Right ventricle myocardium inferior (tissue), 1 donor: ENCODE measurements at regions of chr4 and their contacts with region 1.

Region 1: DNA sequence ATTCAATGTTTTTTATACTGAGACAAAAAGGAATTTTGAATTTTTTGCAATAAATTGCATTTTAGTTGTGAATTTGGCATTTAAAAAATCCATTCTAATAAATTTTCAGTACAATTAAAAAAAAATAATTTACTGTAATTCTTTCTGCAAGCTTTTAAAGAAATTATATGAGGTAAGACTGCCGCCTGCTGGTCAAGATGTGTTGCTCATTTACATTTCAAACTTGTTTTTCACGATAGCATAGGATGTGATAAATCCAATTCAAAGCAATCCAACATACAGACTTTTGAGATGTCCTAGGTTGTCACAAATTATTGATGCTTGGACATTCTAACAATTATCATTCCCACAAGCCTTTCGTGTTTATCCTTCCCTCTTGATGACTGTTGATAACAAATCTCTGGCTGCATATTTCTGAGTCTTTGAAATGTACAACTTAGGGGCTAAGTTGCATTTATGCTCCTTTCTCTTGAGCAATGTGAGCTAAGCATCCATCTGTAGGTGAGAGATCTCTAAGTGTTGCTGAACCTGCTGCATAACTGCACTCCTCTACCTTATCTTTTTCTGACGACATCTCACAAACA is 21.7 kb upstream of the MFAP3L start:
- DNase-seq: no peak
- ATAC-seq: no peak

Region 2: DNA sequence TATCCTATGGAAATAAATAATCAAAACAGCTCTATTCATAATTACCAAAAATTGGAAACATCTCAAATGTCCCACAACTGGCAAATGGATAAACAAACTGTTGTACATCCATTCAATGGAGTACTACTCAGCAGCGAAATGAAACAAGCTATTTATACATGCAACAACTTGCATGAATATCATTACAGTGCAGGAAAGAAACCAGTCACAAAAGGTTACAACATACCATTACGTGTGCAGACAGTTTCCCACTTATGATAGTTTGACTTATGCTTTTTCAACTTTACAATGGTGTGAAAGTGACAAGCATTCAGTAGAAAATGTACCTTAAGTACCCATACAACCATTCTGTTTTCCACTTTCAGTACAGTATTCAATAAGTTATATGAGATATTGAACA is 517.8 kb before region 1 on chr4:
- intact Hi-C with region 1: no loop called
- DNase-seq: no peak
- ATAC-seq: no peak

Region 3: GRCh38 chr4:169807934-169808509 is 239.8 kb before region 1 on chr4:
- intact Hi-C with region 1: loop called (anchors 2 kb)
- DNase-seq: no peak
- ATAC-seq: no peak